ENCODE measurements at regions of chr22 and their contacts with region 1.

Region 1: DNA sequence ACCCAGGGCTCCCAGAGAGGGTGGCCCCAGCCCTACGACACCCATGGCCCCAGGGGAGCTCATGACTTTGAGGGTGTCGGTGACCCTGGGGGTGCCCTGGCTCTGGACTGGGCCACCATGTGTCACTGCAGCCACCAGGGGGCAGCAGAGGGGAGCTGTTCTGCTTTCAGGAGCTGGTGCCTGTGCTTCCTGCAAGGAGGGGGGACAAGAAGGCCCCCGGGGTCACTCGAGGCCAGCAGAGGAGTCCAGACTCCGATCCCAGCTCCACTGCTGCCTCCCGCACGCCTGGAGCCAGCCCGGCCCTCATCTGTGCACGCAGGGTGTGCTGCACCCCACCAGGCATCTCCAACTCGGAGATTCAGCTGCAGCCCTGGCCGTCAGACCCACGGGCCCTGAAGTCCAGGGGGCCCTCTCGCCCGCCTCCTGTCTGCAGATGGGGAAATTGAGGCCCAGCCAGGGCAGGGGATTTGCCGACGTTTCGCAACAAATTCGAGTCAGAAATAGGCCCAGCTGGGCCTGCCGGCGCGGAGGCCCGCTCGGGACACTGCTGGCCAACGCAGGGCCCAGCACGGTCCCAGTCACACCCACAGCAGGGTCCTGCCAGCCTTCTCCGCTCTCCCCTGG is 29.5 kb upstream of the WNT7B start:
- DNase-seq: peak; percentile 94 to 98 (median 97)
- H3K4me3 ChIP-seq: no peak overlapping the region
- H3K27ac ChIP-seq: peak overlapping the region; percentile 48 to 86 (median 70)
- H3K4me1 ChIP-seq: peaks cover 38 to 44% of the 10 kb centered on the region in 2 donors
- H3K27me3 ChIP-seq: no peaks in the 10 kb centered on the region
- CTCF ChIP-seq: peak; percentile 96 to 99 (median 97)
- POLR2A ChIP-seq: no peak

Region 2: DNA sequence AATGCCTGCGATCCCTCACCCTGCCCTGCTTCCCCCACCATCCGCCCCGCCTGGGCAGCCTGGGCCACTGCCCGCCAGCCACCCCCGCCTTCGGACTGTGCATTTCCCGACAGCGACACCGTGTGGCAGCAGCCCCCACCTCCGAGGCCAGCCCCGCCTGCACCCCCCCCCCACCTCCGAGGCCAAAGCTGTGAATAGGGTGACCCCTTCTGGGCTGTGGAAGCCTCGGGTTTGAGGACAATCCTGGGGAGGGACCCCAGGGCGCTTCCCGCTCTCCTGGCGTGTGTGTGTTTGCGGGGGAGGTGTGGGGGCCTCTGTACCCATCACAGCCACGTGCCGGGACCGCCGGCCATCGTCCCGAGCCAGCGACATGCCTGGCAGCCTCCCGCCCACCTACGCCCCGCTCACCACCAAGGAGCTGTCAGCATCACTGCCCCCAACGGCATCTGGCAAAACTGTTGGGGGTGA is 110.0 kb after region 1 on chr22:
- intact Hi-C with region 1: loop called (anchors 2 to 5 kb)
- DNase-seq: peak; percentile 96 to 98 (median 97)
- H3K4me3 ChIP-seq: no peak overlapping the region
- H3K27ac ChIP-seq: peak overlapping the region in 4 of 5 donors; percentile 76 to 88 (median 82)
- H3K4me1 ChIP-seq: peaks cover 23 to 53% of the 10 kb centered on the region in 2 donors
- H3K27me3 ChIP-seq: no peaks in the 10 kb centered on the region
- CTCF ChIP-seq: peak; percentile 69 to 96 (median 91)
- POLR2A ChIP-seq: peak in 1 of 2 donors; percentile 33

Measured in adrenal gland (tissue), 19 donors.